PC-3 (cell line): ENCODE measurements at regions of chr17 and their contacts with region 1.

Region 1: DNA sequence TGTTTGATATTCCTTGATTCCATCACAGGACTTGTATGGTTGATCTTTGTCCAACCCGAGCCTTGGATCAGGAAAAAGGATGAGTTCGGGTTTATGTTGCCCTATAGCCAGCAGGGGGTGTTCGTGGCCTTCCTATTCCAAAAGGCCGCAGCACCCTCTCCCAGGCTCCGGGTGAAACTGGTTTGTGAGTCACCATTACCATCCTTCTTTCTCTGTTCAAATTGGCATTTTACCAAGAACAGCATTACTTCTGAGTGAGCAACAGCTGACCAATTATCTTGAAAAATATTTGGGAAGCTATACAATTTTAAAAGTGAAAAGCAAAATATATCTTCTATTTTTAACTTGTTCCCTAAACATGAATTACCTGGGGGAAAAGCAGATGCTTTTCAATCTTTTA is 24.3 kb upstream of the KRT20 start:
- DNase-seq: peak; percentile 97
- ATAC-seq: peak; percentile 78
- H3K4me3 ChIP-seq: peak overlapping the region; percentile 39; the same call in 1 of the 2 replicates
- H3K27ac ChIP-seq: peak overlapping the region; percentile 98
- H3K4me1 ChIP-seq: peaks cover 67% of the 10 kb centered on the region
- H3K27me3 ChIP-seq: no peaks in the 10 kb centered on the region
- CTCF ChIP-seq: peak; percentile 84

Region 2: GRCh38 chr17:40854159-40854814 is 55.1 kb before region 1 on chr17:
- CTCF ChIA-PET with region 1: no interaction called
- POLR2A ChIA-PET with region 1: no interaction called
- intact Hi-C with region 1: loop called (anchors 1 kb)
- DNase-seq: peak; percentile 84
- ATAC-seq: peak; percentile 81
- H3K4me3 ChIP-seq: no peak overlapping the region
- H3K27ac ChIP-seq: peak overlapping the region; percentile 64
- H3K4me1 ChIP-seq: peaks cover 51% of the 10 kb centered on the region
- H3K27me3 ChIP-seq: no peaks in the 10 kb centered on the region
- CTCF ChIP-seq: no peak

Region 3: GRCh38 chr17:41284043-41284442 is 374.7 kb after region 1 on chr17:
- CTCF ChIA-PET with region 1: no interaction called
- POLR2A ChIA-PET with region 1: no interaction called
- intact Hi-C with region 1: loop called (anchors 1 kb)
- DNase-seq: no peak
- ATAC-seq: no peak
- H3K4me3 ChIP-seq: no peak overlapping the region
- H3K27ac ChIP-seq: no peak overlapping the region
- H3K4me1 ChIP-seq: no peaks in the 10 kb centered on the region
- H3K27me3 ChIP-seq: no peaks in the 10 kb centered on the region
- CTCF ChIP-seq: no peak

Region 4: DNA sequence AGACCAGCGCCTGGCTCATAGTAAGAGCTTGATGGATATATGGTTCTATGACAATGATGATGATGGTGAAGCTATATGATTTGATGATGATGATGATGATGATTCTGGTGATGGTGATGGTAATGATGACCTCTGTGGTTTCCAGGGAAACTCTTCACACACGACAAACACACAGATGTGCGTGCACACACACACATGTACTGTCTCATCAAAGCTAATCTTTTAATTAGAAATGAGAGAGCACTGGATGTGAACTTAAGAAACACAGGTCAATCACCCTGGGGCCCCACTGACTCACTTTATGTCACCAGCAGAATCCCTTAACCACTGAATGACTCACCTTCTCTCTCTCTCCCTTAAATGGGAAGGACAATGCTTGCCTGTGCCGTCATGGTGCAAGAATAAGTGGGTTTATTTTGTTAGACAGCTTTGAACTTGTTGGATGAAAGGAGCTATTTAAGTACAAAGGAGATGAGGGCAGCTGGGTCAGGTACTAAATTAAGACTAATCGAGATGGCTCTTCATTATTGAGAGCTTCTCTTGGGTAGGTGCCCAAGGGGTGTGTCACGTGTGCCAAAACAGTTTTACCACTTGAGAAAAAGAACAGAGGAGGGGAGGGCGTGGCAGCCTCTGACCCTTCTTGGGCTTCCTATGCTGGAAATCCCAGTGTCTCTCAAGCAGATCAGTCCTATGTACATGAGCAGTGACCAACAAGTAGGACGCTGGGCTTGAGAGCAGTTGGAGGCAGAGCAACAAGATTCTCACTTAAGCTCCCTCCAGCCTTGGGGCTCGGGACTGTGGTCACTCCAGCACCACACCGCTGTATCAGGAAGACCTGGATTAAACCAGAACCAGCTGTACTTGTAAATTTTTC is 494.7 kb after region 1 on chr17:
- CTCF ChIA-PET with region 1: no interaction called
- POLR2A ChIA-PET with region 1: no interaction called
- intact Hi-C with region 1: loop called (anchors 5 kb)
- DNase-seq: peak; percentile 92
- ATAC-seq: peak; percentile 84
- H3K4me3 ChIP-seq: no peak overlapping the region
- H3K27ac ChIP-seq: peak overlapping the region; percentile 97
- H3K4me1 ChIP-seq: peaks cover 42% of the 10 kb centered on the region
- H3K27me3 ChIP-seq: no peaks in the 10 kb centered on the region
- CTCF ChIP-seq: no peak